OCI-LY7 (cell line): ENCODE measurements at regions of chr1 and their contacts with region 1.

Region 1: DNA sequence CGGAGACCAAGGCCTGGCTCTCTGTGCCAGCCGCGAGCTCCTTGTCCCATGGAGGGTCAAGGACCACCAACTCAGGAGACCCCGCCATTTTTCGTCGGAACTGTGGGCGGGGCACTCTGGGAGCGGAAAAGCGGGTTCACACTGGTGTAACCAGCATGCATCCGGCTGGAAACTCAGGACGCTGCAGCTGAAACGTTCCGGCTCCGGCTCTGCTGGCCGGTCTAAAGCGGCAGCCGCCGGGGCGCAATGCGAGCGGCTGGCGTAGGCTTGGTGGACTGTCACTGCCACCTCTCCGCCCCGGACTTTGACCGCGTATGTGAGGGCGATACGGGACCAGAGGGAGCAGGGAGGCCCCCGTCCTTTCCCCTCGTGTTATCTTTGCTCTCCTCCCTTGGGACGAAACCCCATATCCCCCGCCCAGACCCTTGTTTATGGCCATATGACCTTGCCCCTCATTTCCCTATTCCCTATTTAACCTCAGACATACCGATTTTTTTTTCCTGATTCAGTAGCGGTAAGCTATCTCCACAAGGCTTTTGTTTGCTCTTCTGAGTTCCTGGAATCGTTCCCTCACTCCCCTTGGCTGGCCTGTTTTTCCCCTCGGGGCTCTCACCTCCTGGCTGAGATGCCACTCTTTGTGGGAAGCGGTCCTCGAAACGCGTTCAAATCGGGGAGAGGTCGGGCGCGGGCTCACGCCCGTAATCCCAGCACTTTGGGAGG is at the starts of genes NSL1 and TATDN3:
- DNase-seq: peak; percentile 94
- H3K4me3 ChIP-seq: peak within 1 kb of the TSS; percentile 89
- H3K27ac ChIP-seq: peak within 1 kb of the TSS; percentile 89
- H3K4me1 ChIP-seq: peaks cover 62% of the 10 kb centered on the region
- CTCF ChIP-seq: no peak
- total RNA-seq, gene NSL1: 70.9 and 74.9 TPM in 2 replicates
- total RNA-seq, gene TATDN3: 35.4 and 36.1 TPM in 2 replicates

Region 2: DNA sequence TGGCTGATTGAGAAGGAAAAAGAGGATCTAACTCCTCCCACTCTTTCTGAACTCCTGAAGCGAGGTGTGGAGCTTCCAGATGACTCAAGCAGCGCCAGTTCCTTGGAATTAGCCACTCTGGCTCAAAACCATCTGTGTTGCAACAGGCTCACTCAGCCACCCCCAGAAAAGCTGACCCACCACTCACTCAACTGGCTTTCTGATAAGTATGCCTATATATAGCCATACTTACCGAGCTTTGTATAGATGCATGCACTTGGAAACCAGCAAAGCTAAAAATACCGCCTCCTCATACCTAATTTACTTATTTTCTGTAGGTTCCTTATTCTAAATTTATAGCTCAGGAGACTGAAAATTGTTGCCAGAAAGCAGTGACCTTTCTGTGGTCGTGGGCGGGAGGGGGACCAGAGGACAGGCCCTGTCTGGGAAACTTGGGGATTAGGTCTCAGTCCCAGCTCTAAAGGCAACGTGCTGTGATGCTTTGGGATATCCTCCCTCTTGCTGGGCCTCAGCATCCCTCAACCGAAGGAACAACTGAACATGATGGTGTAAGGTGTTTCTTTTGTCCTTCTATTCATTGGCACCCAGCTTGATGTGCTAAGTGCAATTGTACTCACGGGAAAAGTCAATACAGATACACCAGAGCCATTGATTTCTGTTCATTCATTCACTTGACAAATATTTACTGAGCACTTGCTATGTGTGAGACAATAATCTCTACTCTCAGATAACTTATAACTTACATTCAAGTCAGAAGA is 293.4 kb before region 1 on chr1:
- CTCF ChIA-PET with region 1: no interaction called
- POLR2A ChIA-PET with region 1: no interaction called
- intact Hi-C with region 1: no loop called
- DNase-seq: no peak
- H3K4me3 ChIP-seq: no peak overlapping the region
- H3K27ac ChIP-seq: no peak overlapping the region
- H3K4me1 ChIP-seq: no peaks in the 10 kb centered on the region
- CTCF ChIP-seq: no peak

Region 3: GRCh38 chr1:212621951-212622305 is 169.9 kb before region 1 on chr1:
- CTCF ChIA-PET with region 1: no interaction called
- POLR2A ChIA-PET with region 1: no interaction called
- intact Hi-C with region 1: no loop called
- DNase-seq: no peak
- H3K4me3 ChIP-seq: no peak overlapping the region
- H3K27ac ChIP-seq: no peak overlapping the region
- H3K4me1 ChIP-seq: no peaks in the 10 kb centered on the region
- CTCF ChIP-seq: no peak

Region 4: DNA sequence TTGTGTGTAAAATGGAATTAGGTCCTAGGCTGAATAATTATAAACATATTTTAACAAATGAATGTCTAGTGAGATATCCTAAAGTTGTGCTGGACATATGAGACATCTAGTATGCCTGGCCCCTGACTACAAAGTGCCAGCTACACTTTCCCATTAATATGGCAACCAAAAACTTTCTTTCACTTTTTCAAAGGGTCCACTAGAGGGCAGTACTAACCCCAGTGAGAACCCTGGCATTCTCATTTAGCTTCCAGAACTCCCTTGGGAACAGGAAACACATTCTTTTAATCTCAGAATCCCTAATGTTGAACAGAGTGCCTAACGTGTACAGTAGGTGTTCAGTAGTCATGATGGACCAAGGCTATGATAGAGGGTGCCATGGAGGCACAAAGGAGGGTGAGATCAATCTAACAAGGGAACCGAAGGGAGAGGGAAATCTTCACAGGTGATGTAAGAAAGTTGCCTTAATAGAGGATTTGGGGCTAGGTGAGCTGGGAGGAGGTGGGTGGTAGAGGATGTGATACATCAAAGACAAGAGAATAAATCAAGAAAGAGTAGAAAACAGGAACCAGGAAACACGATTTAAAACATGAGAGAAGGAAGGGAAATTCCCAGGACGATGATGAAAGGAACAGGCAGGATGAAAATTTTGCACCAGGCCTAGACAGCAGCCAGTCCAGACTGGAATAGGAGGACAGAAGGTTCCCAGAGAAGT is 41.9 kb before region 1 on chr1:
- CTCF ChIA-PET with region 1: no interaction called
- POLR2A ChIA-PET with region 1: interaction called, 25 read pairs
- intact Hi-C with region 1: loop called (anchors 5 kb)
- DNase-seq: peak; percentile 47
- H3K4me3 ChIP-seq: no peak overlapping the region
- H3K27ac ChIP-seq: peak overlapping the region; percentile 37
- H3K4me1 ChIP-seq: peaks cover 41% of the 10 kb centered on the region
- CTCF ChIP-seq: peak; percentile 96

Region 5: GRCh38 chr1:212857992-212858460 is 66.2 kb after region 1 on chr1 and contains the start of gene FLVCR1:
- CTCF ChIA-PET with region 1: no interaction called
- POLR2A ChIA-PET with region 1: interaction called, 15 read pairs
- intact Hi-C with region 1: loop called (anchors 1 kb)
- DNase-seq: peak; percentile 97
- H3K4me3 ChIP-seq: peak within 1 kb of the TSS; percentile 80
- H3K27ac ChIP-seq: peak within 1 kb of the TSS; percentile 49
- H3K4me1 ChIP-seq: peaks cover 34% of the 10 kb centered on the region
- CTCF ChIP-seq: no peak
- total RNA-seq, gene FLVCR1: 10.4 and 22.4 TPM in 2 replicates

Region 6: DNA sequence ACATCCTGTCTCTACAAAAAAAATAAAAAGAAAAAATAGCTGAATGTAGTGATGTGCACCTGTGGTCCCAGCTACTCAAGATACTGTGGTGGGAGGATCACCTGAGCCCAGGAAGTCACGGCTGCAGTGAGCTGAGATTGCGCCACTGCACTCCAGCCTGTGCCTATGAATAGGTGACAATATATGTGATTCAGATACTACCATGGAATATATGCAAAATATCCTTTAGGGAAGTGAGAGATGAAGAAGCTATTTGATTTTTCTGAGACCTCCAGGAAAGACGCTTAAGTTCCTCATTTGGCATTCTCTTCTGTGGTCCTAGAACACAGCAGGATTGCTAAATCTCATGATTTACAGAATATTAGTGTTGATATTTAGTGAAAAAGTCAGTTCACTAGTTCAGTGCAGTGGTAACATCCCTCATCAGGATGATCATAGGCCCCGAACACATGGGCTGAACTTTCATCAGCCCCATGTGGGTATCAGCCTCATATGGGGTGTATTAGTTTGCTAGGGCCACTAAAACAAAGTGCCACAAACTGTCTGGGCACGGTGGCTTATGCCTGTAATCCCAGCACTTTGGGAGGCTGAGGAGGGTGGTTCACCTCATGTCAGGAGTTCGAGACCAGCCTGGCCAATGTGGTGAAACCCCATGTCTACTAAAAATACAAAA is 152.5 kb after region 1 on chr1:
- CTCF ChIA-PET with region 1: no interaction called
- POLR2A ChIA-PET with region 1: interaction called, 3 read pairs
- intact Hi-C with region 1: loop called (anchors 2 kb)
- DNase-seq: peak; percentile 91
- H3K4me3 ChIP-seq: peak overlapping the region; percentile 24
- H3K27ac ChIP-seq: peak overlapping the region; percentile 93
- H3K4me1 ChIP-seq: peaks cover 75% of the 10 kb centered on the region
- CTCF ChIP-seq: no peak

Region 7: DNA sequence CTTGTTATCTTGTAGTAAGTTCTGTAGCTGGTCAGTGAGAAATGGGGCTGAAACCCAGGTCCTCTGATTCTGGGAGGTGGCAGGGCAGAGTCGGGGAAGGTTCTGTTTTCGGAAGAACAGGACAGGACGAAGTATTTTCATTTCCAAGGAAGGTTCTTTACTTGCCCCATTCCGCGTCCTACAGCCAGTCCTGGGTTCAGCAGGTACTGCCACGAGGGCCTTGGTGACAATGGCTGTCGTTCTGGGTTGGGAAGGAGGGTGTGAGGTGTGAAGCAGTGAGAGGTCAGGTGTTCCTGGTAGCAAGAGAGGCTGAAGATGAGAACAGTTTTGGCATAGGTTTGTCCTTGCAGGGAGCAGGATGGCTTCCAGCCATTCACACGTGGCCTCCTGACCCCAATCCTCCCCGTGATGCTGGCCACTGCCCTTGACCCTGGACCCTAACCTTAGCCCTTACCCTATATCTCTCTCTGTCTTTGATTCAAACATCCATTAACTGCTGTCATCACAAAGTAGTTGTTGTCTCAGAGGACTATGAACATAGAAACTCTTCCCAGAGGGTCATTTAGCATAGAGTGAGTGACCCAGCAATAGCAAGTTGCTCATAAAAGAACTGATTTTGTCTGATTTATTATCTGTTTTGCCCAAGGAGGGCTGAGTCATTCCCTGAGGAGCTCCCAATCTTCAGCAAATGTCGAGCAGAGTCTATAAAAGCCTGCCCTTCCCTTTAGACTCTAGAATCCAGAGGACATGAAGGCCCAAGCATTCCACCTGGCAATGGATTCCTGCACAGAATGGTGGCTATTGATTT is 183.5 kb after region 1 on chr1:
- CTCF ChIA-PET with region 1: no interaction called
- POLR2A ChIA-PET with region 1: no interaction called
- intact Hi-C with region 1: no loop called
- DNase-seq: no peak
- H3K4me3 ChIP-seq: no peak overlapping the region
- H3K27ac ChIP-seq: no peak overlapping the region
- H3K4me1 ChIP-seq: no peaks in the 10 kb centered on the region
- CTCF ChIP-seq: no peak

Region 8: GRCh38 chr1:213103377-213104306 is 311.8 kb after region 1 on chr1:
- CTCF ChIA-PET with region 1: no interaction called
- POLR2A ChIA-PET with region 1: no interaction called
- intact Hi-C with region 1: no loop called
- DNase-seq: no peak
- H3K4me3 ChIP-seq: no peak overlapping the region
- H3K27ac ChIP-seq: no peak overlapping the region
- H3K4me1 ChIP-seq: no peaks in the 10 kb centered on the region
- CTCF ChIP-seq: no peak